Head of caudate nucleus (tissue), 42 donors: ENCODE measurements at regions of chr2 and their contacts with region 1.

Region 1: GRCh38 chr2:26033818-26034636 is at the start of gene RAB10:
- DNase-seq: peak; percentile 95 to 100 (median 99)

Region 2: GRCh38 chr2:25878361-25879132 is 155.5 kb before region 1 on chr2 and contains the start of gene ASXL2:
- intact Hi-C with region 1: loop called (anchors 5 kb)
- DNase-seq: peak; percentile 93 to 99 (median 98)

Region 3: DNA sequence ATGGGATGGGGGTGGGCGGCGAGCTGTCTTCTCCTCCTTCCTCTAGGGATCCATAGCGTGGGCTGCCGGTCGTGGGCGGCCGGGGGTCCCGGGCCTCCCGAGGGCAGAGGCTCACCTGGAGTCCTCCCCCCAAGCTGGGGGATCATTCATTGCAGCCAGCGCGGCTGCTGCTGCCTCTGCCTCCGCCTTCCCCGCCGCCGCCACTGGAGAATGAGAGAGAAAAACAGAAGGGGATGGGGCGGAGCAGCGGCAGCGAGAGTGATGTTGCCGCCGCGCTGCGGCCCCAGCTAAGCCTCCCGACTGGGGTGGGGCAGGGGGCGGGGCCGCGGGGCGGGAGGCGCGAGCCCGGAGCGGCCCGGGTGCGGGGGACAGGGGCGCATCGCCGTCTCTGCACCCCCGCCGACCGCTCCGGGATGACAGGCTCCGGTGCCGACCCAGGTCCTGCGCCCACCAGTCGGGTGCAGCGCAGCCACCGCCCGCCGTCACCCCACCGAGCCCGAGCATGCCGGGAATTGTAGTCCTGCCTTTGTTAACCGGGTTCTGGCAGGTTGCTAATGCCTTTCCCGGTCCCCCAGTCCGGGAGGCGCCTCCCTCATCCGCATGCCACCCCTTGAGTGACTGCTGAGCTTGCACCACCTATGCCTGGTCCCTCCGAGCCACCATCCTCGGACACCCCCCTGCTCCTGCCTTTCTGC is 51.6 kb before region 1 on chr2 and contains the start of gene KIF3C:
- intact Hi-C with region 1: loop called (anchors 5 kb)
- DNase-seq: peak; percentile 78 to 96 (median 90)